ENCODE measurements at regions of chr10 and their contacts with region 1.

Region 1: DNA sequence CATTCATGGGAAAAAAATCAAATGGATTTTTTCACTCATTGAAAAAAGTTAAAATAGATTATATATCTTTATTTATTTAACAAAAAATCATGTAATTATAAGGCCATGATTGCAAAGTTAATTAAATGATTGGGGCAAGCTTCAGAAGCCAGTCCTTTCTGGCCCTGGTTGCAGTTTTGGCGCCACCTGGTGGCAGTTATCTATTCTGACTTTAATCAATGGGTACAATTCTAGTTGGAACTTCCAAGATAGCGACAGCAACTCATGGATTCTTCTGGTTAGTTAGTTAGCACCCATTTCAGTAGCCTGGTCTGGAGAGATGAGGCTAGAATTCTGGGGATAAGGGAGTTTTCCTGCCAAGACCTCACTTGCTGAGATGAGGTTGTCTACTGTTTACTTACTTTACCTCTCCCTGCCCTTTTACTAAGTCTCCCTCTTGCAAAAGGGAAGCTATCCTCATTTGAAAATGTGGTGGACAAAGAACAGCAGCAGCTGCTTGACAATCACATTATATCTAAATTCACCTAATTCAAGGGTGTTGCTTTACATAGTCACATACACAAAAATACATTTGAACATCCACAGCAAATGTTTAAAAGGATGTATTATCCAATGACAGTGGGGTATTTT is 42.3 kb downstream of the NOC3L start:
- DNase-seq: peak; percentile 69
- H3K4me3 Mint-ChIP-seq: no peak overlapping the region
- H3K27ac Mint-ChIP-seq: no peak overlapping the region
- H3K4me1 Mint-ChIP-seq: peaks cover 3% of the 10 kb centered on the region
- H3K27me3 Mint-ChIP-seq: no peaks in the 10 kb centered on the region

Region 2: DNA sequence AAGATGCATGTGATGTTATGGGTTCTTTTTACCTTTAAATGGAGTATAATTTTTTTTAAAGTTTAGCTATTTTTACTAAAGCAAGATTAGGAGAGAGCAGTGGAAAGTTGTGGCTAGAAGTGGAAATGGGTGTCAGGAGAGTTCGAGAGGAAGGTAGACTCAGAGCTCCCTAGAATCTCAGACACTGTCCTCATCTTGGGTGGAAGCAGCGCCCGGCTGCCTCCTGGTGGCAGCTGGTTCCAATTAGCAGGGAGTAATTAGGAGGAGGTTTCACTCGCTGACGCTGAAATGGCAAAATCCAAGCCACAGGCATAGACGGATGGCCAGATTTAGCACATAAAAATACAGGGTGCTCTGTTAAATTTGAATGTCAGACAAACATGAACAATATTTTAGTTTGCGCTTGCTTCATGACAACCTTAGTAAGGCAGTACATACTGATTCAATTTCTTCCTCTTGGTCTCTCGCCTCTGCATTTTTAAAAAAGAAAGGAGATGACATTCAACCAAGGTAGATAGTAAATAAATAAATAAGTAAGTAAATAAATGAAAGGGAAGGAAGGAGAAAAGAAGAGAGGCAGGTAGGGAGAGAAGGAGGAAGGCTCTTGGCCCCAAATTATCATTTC is 504.2 kb before region 1 on chr10:
- CTCF ChIA-PET with region 1: interaction called, 6 read pairs
- POLR2A ChIA-PET with region 1: no interaction called
- intact Hi-C with region 1: loop called (anchors 5 kb)
- DNase-seq: peak; percentile 57
- H3K4me3 Mint-ChIP-seq: no peak overlapping the region
- H3K27ac Mint-ChIP-seq: no peak overlapping the region
- H3K4me1 Mint-ChIP-seq: no peaks in the 10 kb centered on the region
- H3K27me3 Mint-ChIP-seq: peaks cover 36% of the 10 kb centered on the region

Region 3: DNA sequence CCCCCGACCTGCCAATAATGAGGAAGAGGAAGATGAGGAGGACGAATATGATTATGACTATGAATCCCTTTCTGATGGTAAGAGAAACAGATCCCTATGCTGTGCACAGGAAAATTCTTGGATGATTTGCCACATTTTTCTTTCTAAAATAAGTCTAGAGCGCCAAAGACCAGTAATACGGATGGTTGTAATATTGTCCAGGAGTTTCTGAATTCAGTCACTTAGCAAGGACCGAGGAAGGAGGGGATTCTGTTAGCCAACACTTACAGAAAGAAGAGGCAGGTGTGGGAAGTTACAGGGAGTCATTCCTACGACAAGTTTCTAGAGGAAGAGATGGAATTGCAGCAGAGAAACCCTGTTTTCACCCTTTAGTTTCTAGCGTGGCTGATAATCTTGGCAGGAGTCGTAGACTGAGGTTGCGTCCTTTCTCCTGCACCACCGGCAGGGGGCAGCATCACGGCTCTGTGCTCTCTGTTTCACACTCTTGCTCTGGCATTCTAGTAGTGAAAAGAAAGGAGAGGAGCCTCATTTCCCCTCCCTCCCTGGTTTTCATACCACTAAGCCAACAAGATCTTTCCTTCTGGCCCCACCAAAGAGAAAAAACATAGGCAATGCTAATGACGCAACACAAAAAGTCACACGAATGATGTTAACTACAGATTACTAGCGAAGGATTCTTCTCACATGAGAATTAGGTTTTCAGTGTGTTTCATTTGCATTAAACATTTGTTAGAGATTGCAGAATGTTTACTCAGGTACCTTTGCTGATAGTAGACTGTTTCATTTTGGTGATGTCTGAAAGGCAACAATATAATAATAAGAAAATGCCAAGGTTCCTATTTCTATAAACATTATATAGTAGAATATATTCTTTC is 40.3 kb before region 1 on chr10:
- CTCF ChIA-PET with region 1: interaction called, 18 read pairs
- POLR2A ChIA-PET with region 1: no interaction called
- intact Hi-C with region 1: loop called (anchors 1 kb)
- DNase-seq: peak; percentile 66
- H3K4me3 Mint-ChIP-seq: no peak overlapping the region
- H3K27ac Mint-ChIP-seq: no peak overlapping the region
- H3K4me1 Mint-ChIP-seq: peaks cover 3% of the 10 kb centered on the region
- H3K27me3 Mint-ChIP-seq: peaks cover 15% of the 10 kb centered on the region

Region 4: GRCh38 chr10:94334857-94335256 is 14.5 kb after region 1 on chr10:
- CTCF ChIA-PET with region 1: interaction called, 42 read pairs
- POLR2A ChIA-PET with region 1: interaction called, 4 read pairs
- intact Hi-C with region 1: no loop called
- DNase-seq: no peak
- H3K4me3 Mint-ChIP-seq: no peak overlapping the region
- H3K27ac Mint-ChIP-seq: no peak overlapping the region
- H3K4me1 Mint-ChIP-seq: no peaks in the 10 kb centered on the region
- H3K27me3 Mint-ChIP-seq: no peaks in the 10 kb centered on the region

Region 5: DNA sequence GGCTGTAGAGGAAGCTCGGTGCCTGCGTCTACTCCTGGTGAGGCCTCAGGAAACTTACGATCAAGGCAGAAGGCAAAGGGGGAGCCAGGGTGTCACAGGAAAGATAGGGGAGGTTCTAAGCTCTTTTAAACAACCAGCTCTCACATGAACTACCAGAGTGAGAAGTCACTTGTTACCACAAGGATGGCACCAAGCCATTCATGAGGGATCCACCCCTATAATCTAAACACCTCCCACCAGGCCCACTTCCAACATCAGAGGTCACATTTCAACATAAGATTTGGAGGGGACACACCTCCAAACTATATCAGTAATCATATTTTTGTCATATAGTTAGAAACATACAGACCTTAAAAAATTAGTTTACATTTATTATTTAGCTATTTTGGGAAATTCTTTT is 32.9 kb after region 1 on chr10:
- CTCF ChIA-PET with region 1: interaction called, 23 read pairs
- POLR2A ChIA-PET with region 1: no interaction called
- intact Hi-C with region 1: no loop called
- DNase-seq: no peak
- H3K4me3 Mint-ChIP-seq: no peak overlapping the region
- H3K27ac Mint-ChIP-seq: no peak overlapping the region
- H3K4me1 Mint-ChIP-seq: peaks cover 15% of the 10 kb centered on the region
- H3K27me3 Mint-ChIP-seq: no peaks in the 10 kb centered on the region

Region 6: DNA sequence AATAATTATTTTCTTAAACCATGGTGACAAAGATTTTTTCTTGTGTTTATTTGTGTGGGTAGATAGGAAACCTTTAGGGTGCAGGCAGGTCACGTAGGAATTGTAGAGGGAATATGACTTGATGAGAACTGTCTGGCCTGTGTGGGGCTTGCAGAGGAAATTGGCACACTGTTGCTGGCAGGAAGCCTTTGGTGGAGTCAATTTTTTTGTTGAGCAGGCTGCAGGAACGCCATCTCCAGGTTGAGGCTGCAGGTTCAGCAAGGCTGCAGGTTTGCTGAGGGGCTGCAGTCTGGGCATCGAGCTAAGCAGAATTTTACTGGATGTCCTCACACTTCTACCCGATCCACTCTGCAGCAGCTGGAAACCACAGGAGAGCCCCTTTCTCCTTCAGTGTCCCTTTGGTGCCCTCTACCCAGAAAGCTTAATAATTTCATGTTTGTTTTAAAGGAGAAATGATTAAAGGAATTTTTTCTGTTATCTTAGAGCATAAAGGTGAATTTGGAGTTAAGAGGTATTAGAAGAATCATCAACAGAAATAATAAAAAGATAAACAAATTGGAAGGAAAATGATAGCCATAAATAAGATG is 119.0 kb after region 1 on chr10:
- CTCF ChIA-PET with region 1: interaction called, 8 read pairs
- POLR2A ChIA-PET with region 1: no interaction called
- intact Hi-C with region 1: loop called (anchors 5 kb)
- DNase-seq: no peak
- H3K4me3 Mint-ChIP-seq: no peak overlapping the region
- H3K27ac Mint-ChIP-seq: no peak overlapping the region
- H3K4me1 Mint-ChIP-seq: no peaks in the 10 kb centered on the region
- H3K27me3 Mint-ChIP-seq: peaks cover 8% of the 10 kb centered on the region